ENCODE measurements at regions of chr6 and their contacts with region 1.

Region 1: DNA sequence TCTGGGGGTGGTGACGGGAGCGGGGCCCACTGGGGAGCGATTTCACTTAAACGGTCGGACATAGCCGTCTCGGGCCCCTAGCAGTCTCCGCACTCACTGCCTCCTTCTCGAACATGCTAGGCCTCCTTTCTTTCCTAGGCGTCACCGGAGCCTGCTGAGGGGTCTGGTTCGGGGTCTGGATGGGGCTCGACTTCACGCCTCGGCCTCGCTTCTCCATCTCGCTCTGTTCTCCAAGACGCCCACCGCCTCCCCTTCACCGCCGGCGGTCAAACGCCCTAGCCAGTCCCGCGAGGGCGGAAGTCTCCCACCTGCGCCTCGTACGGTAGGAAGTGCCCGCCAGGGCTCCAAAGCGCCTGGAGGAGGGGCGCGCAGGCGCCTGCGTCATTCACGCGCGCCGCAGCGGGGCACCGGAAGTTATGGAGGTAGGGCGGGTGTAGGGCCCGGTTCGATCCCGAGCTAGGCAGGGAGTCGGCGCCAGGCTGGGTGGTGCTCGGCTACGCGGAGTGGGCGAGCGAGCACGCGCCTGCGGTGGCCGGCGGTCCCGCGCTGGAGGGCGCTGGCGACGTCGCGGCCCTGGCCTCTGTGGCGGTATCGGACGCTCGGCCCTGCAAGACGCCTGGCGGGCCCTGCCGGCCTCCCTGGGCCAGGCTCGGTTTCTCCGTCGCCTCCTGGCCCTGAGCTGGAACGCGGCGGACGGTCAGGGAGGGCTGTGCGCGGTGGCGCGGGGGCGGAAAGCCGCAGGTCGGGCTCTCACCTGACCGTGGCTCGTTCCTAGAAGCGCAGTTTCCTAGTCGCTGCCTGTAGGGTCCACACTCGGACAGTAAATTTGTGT is at the starts of genes DYNLT2 and ERMARD:
- DNase-seq: peak; percentile 89 to 97 (median 93)
- H3K4me3 ChIP-seq: peak within 1 kb of the TSS; percentile 65 to 97 (median 88)
- H3K27ac ChIP-seq: peak within 1 kb of the TSS; percentile 76 to 99 (median 97)
- H3K27me3 ChIP-seq: no peaks in the 10 kb centered on the region
- CTCF ChIP-seq: peak in 51 of 56 donors; percentile 16 to 71 (median 43)
- total RNA-seq, gene DYNLT2: 1.4 to 6.6 (median 3.0) TPM
- total RNA-seq, gene ERMARD: 16.6 to 44.8 (median 27.1) TPM

Region 2: GRCh38 chr6:169701954-169702839 is 49.3 kb before region 1 on chr6 and contains the starts of genes C6orf120 and WDR27:
- intact Hi-C with region 1: loop called (anchors 1 to 2 kb)
- DNase-seq: peak; percentile 91 to 97 (median 94)
- H3K4me3 ChIP-seq: peak within 1 kb of the TSS; percentile 68 to 99 (median 93)
- H3K27ac ChIP-seq: peak within 1 kb of the TSS; percentile 46 to 98 (median 91)
- H3K27me3 ChIP-seq: no peaks in the 10 kb centered on the region
- CTCF ChIP-seq: peak in 40 of 56 donors; percentile 8 to 61 (median 35)
- total RNA-seq, gene C6orf120: 20.7 to 34.2 (median 27.7) TPM
- total RNA-seq, gene WDR27: 35.8 to 79.9 (median 53.5) TPM

Region 3: GRCh38 chr6:169723200-169723909 is 28.1 kb before region 1 on chr6:
- intact Hi-C with region 1: loop called (anchors 1 kb)
- DNase-seq: peak; percentile 60 to 85 (median 71)
- H3K4me3 ChIP-seq: peak overlapping the region; percentile 54 to 86 (median 75)
- H3K27ac ChIP-seq: peak overlapping the region in 58 of 59 donors; percentile 11 to 93 (median 81)
- H3K27me3 ChIP-seq: no peaks in the 10 kb centered on the region
- CTCF ChIP-seq: peak in 6 of 56 donors; percentile 11 to 26 (median 18)